ENCODE measurements at regions of chr1 and their contacts with region 1.

Region 1: GRCh38 chr1:217919683-217920388 is 288.7 kb downstream of the SPATA17 start:
- DNase-seq: no peak
- ATAC-seq: no peak
- H3K4me3 ChIP-seq: no peak overlapping the region
- H3K27ac ChIP-seq: no peak overlapping the region
- H3K4me1 ChIP-seq: no peaks in the 10 kb centered on the region
- H3K27me3 ChIP-seq: no peaks in the 10 kb centered on the region
- CTCF ChIP-seq: no peak

Region 2: GRCh38 chr1:218171285-218171893 is 251.6 kb after region 1 on chr1:
- CTCF ChIA-PET with region 1: no interaction called
- POLR2A ChIA-PET with region 1: no interaction called
- in situ Hi-C with region 1: no loop called
- intact Hi-C with region 1: loop called (anchors 10 kb)
- DNase-seq: peak; percentile 38
- ATAC-seq: no peak
- H3K4me3 ChIP-seq: no peak overlapping the region
- H3K27ac ChIP-seq: no peak overlapping the region
- H3K4me1 ChIP-seq: no peaks in the 10 kb centered on the region
- H3K27me3 ChIP-seq: peaks cover 13% of the 10 kb centered on the region
- CTCF ChIP-seq: peak; percentile 75; the same call in 1 of the 2 replicates